ENCODE measurements at regions of chr14 and their contacts with region 1.

Region 1: DNA sequence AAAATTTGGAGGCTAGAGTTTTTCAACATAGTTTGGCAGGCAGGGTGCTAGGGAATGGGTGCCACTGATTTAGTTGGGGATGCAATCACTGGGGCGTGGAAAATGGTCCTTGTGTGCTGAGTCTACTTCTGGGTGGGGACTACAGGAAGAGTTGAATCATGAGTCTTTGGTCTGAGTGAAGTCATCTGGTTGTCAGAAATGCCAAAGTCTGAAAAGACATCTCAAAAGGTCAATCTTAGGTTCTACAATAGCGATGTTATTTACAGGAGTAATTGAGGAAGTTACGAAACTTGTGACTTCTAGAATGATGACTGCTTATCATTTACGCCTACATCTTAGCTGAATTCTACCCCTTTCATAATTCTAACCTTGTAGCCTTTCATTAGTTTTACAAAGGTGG is 209.1 kb downstream of the NUBPL start:
- DNase-seq: no peak
- ATAC-seq: no peak
- H3K4me3 ChIP-seq: no peak overlapping the region
- H3K27ac ChIP-seq: no peak overlapping the region
- H3K4me1 ChIP-seq: peaks cover 12% of the 10 kb centered on the region
- H3K27me3 ChIP-seq: no peaks in the 10 kb centered on the region
- CTCF ChIP-seq: no peak
- EP300 ChIP-seq: no peak
- POLR2A ChIP-seq: no peak
- RAD21 ChIP-seq: no peak

Region 2: DNA sequence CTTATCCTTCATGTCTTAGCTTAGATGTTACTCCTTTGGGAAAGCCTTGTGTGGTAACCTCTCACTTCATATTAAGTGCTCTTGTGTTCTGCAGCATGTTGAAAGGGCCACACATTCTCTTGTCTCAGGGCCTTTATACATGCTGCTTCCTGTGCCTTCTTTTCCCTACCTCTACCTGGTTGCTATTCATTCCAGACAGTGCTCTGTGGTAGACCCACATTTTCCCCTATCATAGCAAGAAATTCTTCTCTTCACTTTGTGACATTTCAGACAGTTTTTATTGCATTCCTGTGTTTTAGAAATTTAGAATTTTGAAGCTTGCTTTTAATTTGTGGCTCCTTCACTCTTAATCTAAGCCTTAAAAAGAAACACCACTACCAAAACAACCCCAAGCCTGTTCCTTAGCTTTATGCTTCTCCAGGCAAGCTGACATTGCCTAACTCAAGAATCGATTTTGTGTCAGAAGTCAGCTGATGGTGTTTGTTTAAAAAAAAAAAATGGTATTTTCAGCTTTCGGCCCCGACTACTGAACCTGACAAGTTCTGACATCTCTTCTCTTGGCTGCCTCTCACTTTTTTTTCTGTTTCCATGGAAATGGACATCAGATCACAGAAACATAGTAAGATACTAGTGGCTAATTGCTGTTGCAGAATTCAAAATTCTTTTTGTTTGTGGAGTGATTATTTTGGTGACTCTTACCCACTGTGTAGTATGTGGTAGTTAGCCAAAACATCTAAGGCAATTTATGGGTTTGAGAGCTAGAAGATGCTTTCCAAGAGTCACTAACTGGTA is 52.8 kb before region 1 on chr14:
- CTCF ChIA-PET with region 1: no interaction called
- POLR2A ChIA-PET with region 1: no interaction called
- in situ Hi-C with region 1: no loop called
- intact Hi-C with region 1: loop called (anchors 2 kb)
- DNase-seq: peak; percentile 84
- ATAC-seq: peak; percentile 95
- H3K4me3 ChIP-seq: no peak overlapping the region
- H3K27ac ChIP-seq: peak overlapping the region; percentile 16
- H3K4me1 ChIP-seq: peaks cover 18% of the 10 kb centered on the region
- H3K27me3 ChIP-seq: no peaks in the 10 kb centered on the region
- CTCF ChIP-seq: no peak
- EP300 ChIP-seq: peak; percentile 88 to 92
- POLR2A ChIP-seq: no peak
- RAD21 ChIP-seq: no peak